Caco-2 (cell line): ENCODE measurements at regions of chr12 and their contacts with region 1.

Region 1: GRCh38 chr12:16155940-16156339 is 121.5 kb downstream of the SLC15A5 start:
- DNase-seq: no peak
- H3K4me3 ChIP-seq: no peak overlapping the region
- H3K4me3 Mint-ChIP-seq: no peak overlapping the region
- H3K27ac Mint-ChIP-seq: no peak overlapping the region
- H3K4me1 ChIP-seq: 0 out of 2 replicates have a peak, but pooled peaks cover 3% of the 10 kb centered on the region
- H3K4me1 Mint-ChIP-seq: peaks cover 9% of the 10 kb centered on the region
- H3K27me3 ChIP-seq: no peaks in the 10 kb centered on the region
- H3K27me3 Mint-ChIP-seq: peaks cover 6% of the 10 kb centered on the region
- CTCF ChIP-seq: no peak

Region 2: DNA sequence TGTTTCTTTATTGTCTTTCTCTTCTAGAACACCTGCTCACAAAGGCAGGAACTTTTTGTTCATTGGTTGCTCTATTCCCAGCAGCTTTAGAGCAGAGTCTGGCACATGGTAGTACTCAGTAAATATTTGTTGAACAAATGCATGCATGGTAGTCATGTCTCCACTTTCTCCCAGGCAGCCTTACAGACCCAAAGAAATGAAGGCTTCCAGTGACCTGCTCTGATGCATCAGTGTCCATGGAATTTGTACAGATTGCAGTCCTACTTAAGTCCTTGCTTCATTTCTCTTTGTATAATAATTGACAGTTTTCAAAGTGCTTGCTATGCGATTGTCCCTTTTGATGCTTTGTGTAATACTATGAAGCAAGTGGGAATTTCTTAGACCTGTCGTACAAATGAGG is 125.2 kb before region 1 on chr12:
- CTCF ChIA-PET with region 1: no interaction called
- POLR2A ChIA-PET with region 1: no interaction called
- intact Hi-C with region 1: no loop called
- DNase-seq: peak; percentile 80 to 81
- H3K4me3 ChIP-seq: no peak overlapping the region
- H3K4me3 Mint-ChIP-seq: no peak overlapping the region
- H3K27ac Mint-ChIP-seq: peak overlapping the region; percentile 81
- H3K4me1 ChIP-seq: peaks cover 24% of the 10 kb centered on the region
- H3K4me1 Mint-ChIP-seq: peaks cover 23% of the 10 kb centered on the region
- H3K27me3 ChIP-seq: no peaks in the 10 kb centered on the region
- H3K27me3 Mint-ChIP-seq: no peaks in the 10 kb centered on the region
- CTCF ChIP-seq: no peak

Region 3: GRCh38 chr12:17810399-17810798 is 1654.5 kb after region 1 on chr12:
- CTCF ChIA-PET with region 1: no interaction called
- POLR2A ChIA-PET with region 1: no interaction called
- intact Hi-C with region 1: loop called (anchors 10 kb)
- DNase-seq: no peak
- H3K4me3 ChIP-seq: no peak overlapping the region
- H3K4me3 Mint-ChIP-seq: no peak overlapping the region
- H3K27ac Mint-ChIP-seq: no peak overlapping the region
- H3K4me1 ChIP-seq: no peaks in the 10 kb centered on the region
- H3K4me1 Mint-ChIP-seq: no peaks in the 10 kb centered on the region
- H3K27me3 ChIP-seq: no peaks in the 10 kb centered on the region
- H3K27me3 Mint-ChIP-seq: no peaks in the 10 kb centered on the region
- CTCF ChIP-seq: no peak